B cell (primary cell): ENCODE measurements at regions of chr16 and their contacts with region 1.

Region 1: DNA sequence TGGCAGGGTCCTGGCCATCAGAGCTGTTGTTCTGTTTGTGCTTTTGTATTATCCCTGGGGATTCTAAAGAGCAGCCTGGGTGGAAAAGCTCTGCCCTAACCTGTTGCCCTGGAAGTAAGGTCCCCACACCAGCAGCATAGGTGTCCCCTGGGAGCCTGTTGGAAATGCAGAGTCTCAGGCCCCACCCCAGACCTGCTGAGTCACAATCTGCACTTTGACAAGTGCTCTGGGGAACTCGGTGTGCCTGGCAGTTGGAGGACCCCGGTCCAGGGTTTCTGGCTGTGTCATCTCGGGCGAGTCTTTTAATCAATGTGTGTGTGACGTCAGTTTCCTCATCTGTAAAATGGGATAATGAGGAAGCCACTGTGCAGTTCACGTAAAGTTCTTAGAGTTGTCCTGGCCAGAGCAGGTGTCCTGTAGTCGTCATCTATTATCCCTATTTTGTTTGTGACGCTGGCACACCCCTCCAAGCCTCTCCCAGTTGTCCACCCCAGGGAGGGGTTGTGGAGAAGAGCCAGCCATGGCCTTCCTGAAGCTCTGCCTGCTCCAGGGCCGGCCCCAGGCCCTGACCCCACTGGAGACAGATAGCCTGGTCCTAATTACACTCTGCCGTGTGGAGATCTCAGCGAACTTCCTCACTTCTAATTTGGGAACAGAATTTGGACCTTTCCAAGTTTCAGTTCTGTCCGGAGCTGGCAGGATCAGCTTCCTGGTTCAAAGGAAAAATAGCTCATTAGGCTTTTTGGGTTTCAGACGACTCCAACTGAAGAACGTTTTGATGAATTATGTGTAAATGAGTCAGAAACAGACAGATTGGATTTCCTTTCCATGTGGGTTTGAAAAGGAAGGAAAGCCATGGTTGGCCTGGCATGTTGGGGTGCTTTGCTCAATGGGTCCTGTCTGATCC is 295.7 kb upstream of the FOXF1 start:
- DNase-seq: no peak
- ATAC-seq: no peak
- H3K4me3 ChIP-seq: no peak overlapping the region
- H3K4me3 Mint-ChIP-seq: no peak overlapping the region
- H3K27ac ChIP-seq: no peak overlapping the region
- H3K27ac Mint-ChIP-seq: no peak overlapping the region
- H3K4me1 ChIP-seq: peaks cover 20 to 36% of the 10 kb centered on the region in 2 donors
- H3K4me1 Mint-ChIP-seq: peaks cover 36% of the 10 kb centered on the region
- H3K27me3 ChIP-seq: peaks cover 0 to 5% (median 0%) of the 10 kb centered on the region in 4 experiments
- H3K27me3 Mint-ChIP-seq: no peaks in the 10 kb centered on the region
- CTCF ChIP-seq: no peak

Region 2: GRCh38 chr16:86158688-86159360 is 55.8 kb before region 1 on chr16:
- CTCF ChIA-PET with region 1: no interaction called
- POLR2A ChIA-PET with region 1: no interaction called
- intact Hi-C with region 1: loop called (anchors 10 kb)
- DNase-seq: no peak
- ATAC-seq: no peak
- H3K4me3 ChIP-seq: no peak overlapping the region
- H3K4me3 Mint-ChIP-seq: no peak overlapping the region
- H3K27ac ChIP-seq: no peak overlapping the region
- H3K27ac Mint-ChIP-seq: no peak overlapping the region
- H3K4me1 ChIP-seq: peaks cover 0 to 5% of the 10 kb centered on the region in 2 donors
- H3K4me1 Mint-ChIP-seq: peaks cover 3% of the 10 kb centered on the region
- H3K27me3 ChIP-seq: peaks cover 0 to 6% (median 2%) of the 10 kb centered on the region in 4 experiments
- H3K27me3 Mint-ChIP-seq: peaks cover 17% of the 10 kb centered on the region
- CTCF ChIP-seq: no peak